ENCODE measurements at regions of chr4 and their contacts with region 1.

Region 1: DNA sequence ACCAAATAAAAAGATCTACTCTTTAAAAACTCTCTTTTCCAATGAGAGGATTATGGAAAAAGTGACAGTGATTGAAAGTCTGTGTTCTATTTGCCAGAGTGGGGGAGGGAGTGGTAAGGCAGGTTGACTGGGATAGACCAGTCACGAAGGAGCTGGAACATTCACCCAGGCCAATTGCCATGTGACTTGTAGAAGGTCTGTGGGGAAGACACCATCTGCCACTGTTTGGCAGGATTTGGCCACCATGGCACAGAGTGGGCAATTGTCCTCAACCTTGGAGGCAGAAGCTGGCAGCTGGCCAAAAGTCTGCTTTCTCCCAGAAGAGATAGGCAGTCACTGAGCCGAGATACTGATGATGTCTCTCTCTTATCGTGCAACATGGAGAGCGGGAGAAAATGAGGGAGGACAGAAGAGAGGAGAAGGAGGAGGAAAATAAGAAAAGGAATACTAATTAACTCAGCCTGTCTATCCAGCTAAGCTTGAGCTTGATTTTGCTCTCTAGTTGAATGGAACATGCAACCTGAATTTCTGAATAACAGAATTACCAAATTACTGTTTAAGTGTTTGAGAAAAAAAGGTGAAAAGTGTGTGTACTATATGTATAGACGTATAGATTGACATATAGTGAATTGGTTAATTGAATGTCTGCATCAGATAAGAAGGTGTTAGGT is 267.1 kb downstream of the ARHGAP24 start:
- DNase-seq: no peak
- ATAC-seq: no peak
- H3K4me3 ChIP-seq: no peak overlapping the region
- H3K4me3 Mint-ChIP-seq: no peak overlapping the region
- H3K27ac ChIP-seq: no peak overlapping the region
- H3K27ac Mint-ChIP-seq: peak overlapping the region; percentile 5
- H3K4me1 ChIP-seq: peaks cover 62 to 65% of the 10 kb centered on the region in 2 donors
- H3K4me1 Mint-ChIP-seq: peaks cover 60% of the 10 kb centered on the region
- H3K27me3 ChIP-seq: no peaks in the 10 kb centered on the region
- H3K27me3 Mint-ChIP-seq: no peaks in the 10 kb centered on the region
- CTCF ChIP-seq: no peak

Region 2: DNA sequence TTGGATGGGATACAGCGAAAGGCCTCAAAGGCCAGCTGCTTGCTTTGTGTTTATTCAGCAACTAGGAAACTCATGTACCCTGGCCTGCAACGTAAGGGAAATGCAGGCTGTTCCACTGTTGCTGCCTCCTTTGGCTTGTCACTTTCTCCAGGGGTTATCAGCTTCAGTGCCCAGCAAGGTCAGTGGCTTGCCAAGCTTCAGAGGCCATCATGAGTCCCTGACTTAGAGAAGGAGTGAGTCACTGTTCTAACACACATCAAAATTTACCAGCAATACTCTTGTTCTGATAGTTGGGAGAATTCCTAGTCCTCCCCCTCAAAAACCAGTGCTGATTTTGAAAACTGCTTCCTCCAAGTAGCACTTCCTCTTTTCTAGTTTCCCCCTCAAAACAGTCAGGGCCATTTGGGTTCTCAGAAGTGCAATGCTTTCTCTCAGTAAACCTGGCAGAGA is 16.3 kb before region 1 on chr4:
- CTCF ChIA-PET with region 1: interaction called, 8 read pairs
- POLR2A ChIA-PET with region 1: no interaction called
- intact Hi-C with region 1: loop called (anchors 2 kb)
- DNase-seq: peak; percentile 80
- ATAC-seq: peak; percentile 87
- H3K4me3 ChIP-seq: peak overlapping the region in 1 of 5 experiments; percentile 34
- H3K4me3 Mint-ChIP-seq: peak overlapping the region; percentile 66
- H3K27ac ChIP-seq: peak overlapping the region; percentile 74 to 82
- H3K27ac Mint-ChIP-seq: peak overlapping the region; percentile 94
- H3K4me1 ChIP-seq: peaks cover 24 to 26% of the 10 kb centered on the region in 2 donors
- H3K4me1 Mint-ChIP-seq: peaks cover 32% of the 10 kb centered on the region
- H3K27me3 ChIP-seq: no peaks in the 10 kb centered on the region
- H3K27me3 Mint-ChIP-seq: no peaks in the 10 kb centered on the region
- CTCF ChIP-seq: no peak

Region 3: DNA sequence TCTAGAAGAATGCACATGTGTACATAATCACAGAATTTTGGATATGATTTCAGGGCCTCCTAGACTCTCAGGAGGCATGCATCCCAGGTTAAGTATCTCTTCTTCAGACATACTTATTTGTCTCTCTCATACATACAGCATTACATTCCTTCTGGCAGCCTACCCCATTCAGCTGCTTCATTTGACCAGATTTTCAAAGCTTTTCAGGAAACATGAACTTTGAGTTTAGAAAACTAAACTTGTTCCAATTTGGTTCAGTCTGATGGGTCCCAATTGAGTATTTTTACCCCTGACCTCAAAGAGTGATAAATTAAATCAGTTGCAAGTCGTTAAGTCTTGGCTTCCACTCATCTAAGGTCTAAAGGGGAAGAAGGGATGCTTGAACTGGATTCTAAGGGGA is 63.8 kb after region 1 on chr4:
- CTCF ChIA-PET with region 1: no interaction called
- POLR2A ChIA-PET with region 1: no interaction called
- intact Hi-C with region 1: no loop called
- DNase-seq: no peak
- ATAC-seq: no peak
- H3K4me3 ChIP-seq: no peak overlapping the region
- H3K4me3 Mint-ChIP-seq: no peak overlapping the region
- H3K27ac ChIP-seq: no peak overlapping the region
- H3K27ac Mint-ChIP-seq: no peak overlapping the region
- H3K4me1 ChIP-seq: no peaks in the 10 kb centered on the region
- H3K4me1 Mint-ChIP-seq: no peaks in the 10 kb centered on the region
- H3K27me3 ChIP-seq: no peaks in the 10 kb centered on the region
- H3K27me3 Mint-ChIP-seq: no peaks in the 10 kb centered on the region
- CTCF ChIP-seq: no peak

Measured in B cell (primary cell).